ENCODE measurements at regions of chr9 and their contacts with region 1.

Region 1: GRCh38 chr9:36855448-36856315 is 178.4 kb downstream of the PAX5 start:
- DNase-seq: no peak
- ATAC-seq: no peak
- H3K4me3 ChIP-seq: no peak overlapping the region
- H3K27ac ChIP-seq: no peak overlapping the region
- H3K4me1 ChIP-seq: no peaks in the 10 kb centered on the region
- H3K27me3 ChIP-seq: peaks cover 0 to 8% (median 6%) of the 10 kb centered on the region in 3 donors
- CTCF ChIP-seq: no peak
- POLR2A ChIP-seq: no peak

Region 2: GRCh38 chr9:36415822-36416515 is 439.7 kb before region 1 on chr9:
- in situ Hi-C with region 1: no loop called
- intact Hi-C with region 1: loop called (anchors 10 kb)
- DNase-seq: no peak
- ATAC-seq: no peak
- H3K4me3 ChIP-seq: no peak overlapping the region
- H3K27ac ChIP-seq: no peak overlapping the region
- H3K4me1 ChIP-seq: peaks cover 10 to 11% of the 10 kb centered on the region in 2 donors
- H3K27me3 ChIP-seq: no peaks in the 10 kb centered on the region
- CTCF ChIP-seq: no peak
- POLR2A ChIP-seq: no peak

Measured in gastrocnemius medialis (tissue), 4 donors.